Heart right ventricle (tissue), 16 donors: ENCODE measurements at regions of chr18 and their contacts with region 1.

Region 1: GRCh38 chr18:21330122-21330701 is 88.2 kb downstream of the GREB1L start:
- DNase-seq: peak in 1 of 2 donors; percentile 27
- ATAC-seq: peak; percentile 71 to 99 (median 94)
- H3K4me3 ChIP-seq: no peak overlapping the region
- H3K27ac ChIP-seq: peak overlapping the region; percentile 3 to 82 (median 76)
- H3K4me1 ChIP-seq: peaks cover 0 to 9% (median 0%) of the 10 kb centered on the region in 9 donors
- H3K27me3 ChIP-seq: no peaks in the 10 kb centered on the region
- CTCF ChIP-seq: no peak

Region 2: DNA sequence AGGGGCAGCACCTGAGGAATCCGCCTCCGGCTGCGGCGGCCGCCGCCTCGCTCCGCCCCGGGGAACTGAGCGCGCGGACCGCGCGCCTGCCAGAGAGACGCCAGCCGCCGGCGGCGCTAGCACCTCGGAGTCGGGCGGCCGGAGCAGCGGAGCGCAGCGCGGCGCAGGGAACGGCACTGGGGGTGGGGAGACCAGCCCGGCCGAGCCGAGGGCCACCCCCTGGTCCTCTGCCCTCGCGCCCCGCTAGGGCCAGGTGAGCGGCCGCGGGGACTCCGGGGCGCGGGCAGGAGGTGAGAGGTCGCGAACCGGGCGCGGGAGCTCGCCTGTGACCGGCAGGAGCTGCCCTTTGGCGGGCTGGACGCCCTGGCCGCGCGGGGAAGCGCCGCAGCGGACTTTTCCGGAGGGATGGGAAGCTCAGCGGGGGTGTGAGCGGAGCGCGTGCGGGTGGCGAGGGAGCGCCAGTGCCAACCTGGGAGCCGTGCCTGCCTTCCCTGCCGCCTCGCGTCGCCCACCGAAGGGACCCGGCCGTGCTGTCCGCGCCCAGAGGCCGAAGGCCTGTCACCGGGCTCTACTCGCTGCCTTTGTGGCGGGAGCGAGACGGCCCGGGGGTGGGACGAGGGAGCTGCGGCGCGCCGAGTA is 88.0 kb before region 1 on chr18 and contains the start of gene GREB1L:
- intact Hi-C with region 1: loop called in 3 of 10 experiments (anchors 5 to 10 kb)
- DNase-seq: peak; percentile 42 to 69
- ATAC-seq: peak; percentile 86 to 97 (median 94)
- H3K4me3 ChIP-seq: peak within 1 kb of the TSS; percentile 48 to 71 (median 66)
- H3K27ac ChIP-seq: peak within 1 kb of the TSS in 8 of 10 donors; percentile 12 to 77 (median 58)
- H3K4me1 ChIP-seq: peaks cover 0 to 21% (median 16%) of the 10 kb centered on the region in 9 donors
- H3K27me3 ChIP-seq: peaks cover 0 to 80% (median 46%) of the 10 kb centered on the region in 7 donors
- CTCF ChIP-seq: peak in 6 of 9 donors; percentile 19 to 58 (median 44)
- total RNA-seq, gene GREB1L: 2.7 to 14.3 (median 11.8) TPM

Region 3: DNA sequence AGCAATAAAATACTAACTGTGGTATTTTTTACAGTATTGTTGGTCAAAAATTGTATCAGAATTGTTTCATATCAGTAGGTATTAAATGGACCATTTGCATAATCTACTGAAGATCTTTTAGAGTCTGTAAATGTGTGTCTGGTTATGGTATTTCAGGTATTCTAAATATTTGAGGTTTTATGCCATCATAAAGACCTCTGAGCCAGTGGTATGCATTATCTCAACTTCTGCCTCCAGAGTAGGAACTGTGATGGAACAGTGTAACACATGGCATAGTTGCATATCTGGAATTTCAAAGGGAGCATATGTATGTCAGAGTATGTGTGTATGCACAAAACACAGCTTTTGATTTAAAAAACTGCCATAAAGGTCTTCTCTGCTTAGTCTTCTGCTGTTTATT is 72.8 kb before region 1 on chr18:
- intact Hi-C with region 1: loop called in 2 of 10 experiments (anchors 5 to 10 kb)
- DNase-seq: no peak
- ATAC-seq: no peak
- H3K4me3 ChIP-seq: no peak overlapping the region
- H3K27ac ChIP-seq: no peak overlapping the region
- H3K4me1 ChIP-seq: peaks cover 0 to 7% (median 0%) of the 10 kb centered on the region in 9 donors
- H3K27me3 ChIP-seq: peaks cover 0 to 4% (median 0%) of the 10 kb centered on the region in 7 donors
- CTCF ChIP-seq: no peak

Region 4: DNA sequence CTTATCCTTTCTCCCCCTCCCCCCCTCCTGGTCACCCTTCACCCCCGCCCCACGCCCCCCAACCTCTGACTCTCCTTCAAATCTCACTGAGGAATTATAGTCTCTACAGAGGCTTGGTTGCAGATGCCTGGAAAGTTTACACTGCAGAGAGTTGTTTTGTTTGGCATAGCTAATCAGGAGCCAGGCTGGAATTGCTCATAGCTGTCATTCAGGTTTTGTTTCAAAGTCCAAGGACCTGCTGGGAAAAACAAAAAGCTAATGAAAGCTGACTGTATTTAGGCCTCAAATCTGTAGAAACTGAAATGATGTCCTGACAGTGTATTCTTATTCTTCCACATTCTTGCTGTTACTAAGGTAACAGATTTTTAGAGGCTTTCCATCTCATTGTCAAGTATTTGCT is 65.6 kb before region 1 on chr18:
- intact Hi-C with region 1: loop called in 2 of 10 experiments (anchors 5 to 10 kb)
- DNase-seq: no peak
- ATAC-seq: peak in 3 of 8 donors; percentile 33 to 65 (median 54)
- H3K4me3 ChIP-seq: no peak overlapping the region
- H3K27ac ChIP-seq: peak overlapping the region in 1 of 10 donors; percentile 28
- H3K4me1 ChIP-seq: peaks cover 0 to 17% (median 3%) of the 10 kb centered on the region in 9 donors
- H3K27me3 ChIP-seq: no peaks in the 10 kb centered on the region
- CTCF ChIP-seq: no peak

Region 5: DNA sequence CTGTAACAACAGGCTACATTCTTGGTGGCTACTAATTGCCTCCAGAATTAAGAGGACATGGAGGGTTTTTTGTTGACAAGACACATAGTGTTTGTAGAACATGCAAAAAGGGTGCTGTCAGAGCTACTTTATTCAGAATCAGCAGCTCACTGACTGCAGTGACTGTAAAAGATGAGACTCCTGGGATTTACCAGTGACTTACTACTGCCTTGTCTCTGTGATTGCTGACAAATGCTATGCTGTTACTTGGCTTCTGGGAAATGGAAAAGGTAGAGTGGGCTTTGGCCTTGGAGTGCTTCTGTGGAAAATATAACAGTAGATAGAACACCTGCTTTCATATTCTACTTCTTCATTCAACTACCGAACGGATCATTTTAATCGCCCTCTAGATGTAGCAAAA is 40.4 kb before region 1 on chr18:
- intact Hi-C with region 1: loop called in 1 of 10 experiments (anchors 5 kb)
- DNase-seq: no peak
- ATAC-seq: no peak
- H3K4me3 ChIP-seq: no peak overlapping the region
- H3K27ac ChIP-seq: no peak overlapping the region
- H3K4me1 ChIP-seq: no peaks in the 10 kb centered on the region
- H3K27me3 ChIP-seq: no peaks in the 10 kb centered on the region
- CTCF ChIP-seq: no peak

Region 6: GRCh38 chr18:21361307-21361880 is 31.2 kb after region 1 on chr18:
- intact Hi-C with region 1: loop called in 1 of 10 experiments (anchors 2 kb)
- DNase-seq: no peak
- ATAC-seq: peak in 1 of 8 donors; percentile 22
- H3K4me3 ChIP-seq: no peak overlapping the region
- H3K27ac ChIP-seq: no peak overlapping the region
- H3K4me1 ChIP-seq: peaks cover 0 to 8% (median 0%) of the 10 kb centered on the region in 9 donors
- H3K27me3 ChIP-seq: peaks cover 0 to 3% (median 0%) of the 10 kb centered on the region in 7 donors
- CTCF ChIP-seq: no peak